ENCODE measurements at regions of chr11 and their contacts with region 1.

Region 1: DNA sequence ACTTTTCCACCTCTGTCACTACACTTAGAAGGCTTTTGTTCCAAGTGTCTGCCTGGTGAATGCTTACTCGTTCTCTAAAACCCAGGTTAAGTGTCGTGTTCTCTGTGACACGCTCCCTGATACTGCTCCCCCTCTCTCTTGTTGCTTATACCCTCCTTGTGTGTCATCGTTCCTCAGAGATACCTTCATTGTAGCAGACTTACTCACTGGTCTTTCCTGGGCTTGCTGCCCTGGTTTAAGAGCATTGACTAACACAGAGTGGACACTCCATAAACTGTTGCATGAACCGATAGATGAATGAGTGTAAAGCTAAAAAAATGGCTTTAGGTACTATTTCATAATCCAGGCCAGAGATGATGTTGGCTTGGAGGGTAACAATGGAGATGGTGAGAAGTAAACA is 171.3 kb downstream of the GRIK4 start:
- DNase-seq: peak in 1 of 2 experiments; percentile 5
- H3K4me3 ChIP-seq: no peak overlapping the region
- H3K4me3 Mint-ChIP-seq: no peak overlapping the region
- H3K27ac Mint-ChIP-seq: no peak overlapping the region
- H3K4me1 ChIP-seq: no peaks in the 10 kb centered on the region
- H3K4me1 Mint-ChIP-seq: no peaks in the 10 kb centered on the region
- H3K27me3 ChIP-seq: no peaks in the 10 kb centered on the region
- H3K27me3 Mint-ChIP-seq: peaks cover 4% of the 10 kb centered on the region
- CTCF ChIP-seq: no peak

Region 2: DNA sequence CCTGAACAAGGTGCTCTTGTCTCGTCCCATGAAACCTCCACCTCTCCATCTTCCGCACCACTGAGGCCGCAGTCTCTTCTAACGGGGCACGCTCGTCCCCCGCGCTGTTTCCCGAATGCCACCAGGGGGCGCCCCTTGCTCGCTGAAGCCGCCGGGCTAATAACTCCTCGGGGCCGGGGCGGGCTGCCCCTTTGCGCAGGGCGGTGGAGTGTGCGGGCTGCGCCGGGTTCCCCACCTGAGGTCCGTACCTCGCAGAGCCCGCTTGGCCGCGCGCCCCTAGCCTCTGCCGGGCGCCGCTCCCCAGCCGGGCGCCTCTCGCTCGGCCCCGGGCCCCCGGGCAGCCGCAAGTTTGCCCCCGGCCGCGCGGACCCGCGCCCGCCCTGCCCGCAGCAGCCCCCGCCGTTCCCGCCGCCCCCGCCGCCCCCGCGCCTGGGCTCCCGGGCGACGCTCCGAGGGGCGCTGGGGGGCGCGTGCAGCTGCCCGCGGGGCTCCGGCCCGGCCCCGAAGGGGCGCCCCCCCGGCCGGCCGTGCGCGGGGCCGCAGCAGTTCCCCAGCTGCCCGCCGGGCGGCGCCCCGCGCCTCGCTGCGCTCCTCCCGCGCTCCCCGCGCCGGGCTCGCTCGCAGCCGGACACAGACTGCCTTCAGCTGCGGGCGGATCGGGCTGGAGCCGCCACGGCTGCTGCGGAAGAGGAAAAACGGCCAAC is 171.6 kb before region 1 on chr11 and contains the start of gene GRIK4:
- CTCF ChIA-PET with region 1: interaction called, 75 read pairs
- POLR2A ChIA-PET with region 1: no interaction called
- intact Hi-C with region 1: loop called (anchors 1 kb)
- DNase-seq: peak; percentile 88 to 95
- H3K4me3 ChIP-seq: peak within 1 kb of the TSS; percentile 55
- H3K4me3 Mint-ChIP-seq: peak within 1 kb of the TSS; percentile 53
- H3K27ac Mint-ChIP-seq: no peak within 1 kb of the TSS
- H3K4me1 ChIP-seq: no peaks in the 10 kb centered on the region
- H3K4me1 Mint-ChIP-seq: peaks cover 5% of the 10 kb centered on the region
- H3K27me3 ChIP-seq: peaks cover 2% of the 10 kb centered on the region; the same call in 1 of the 2 replicates
- H3K27me3 Mint-ChIP-seq: peaks cover 25% of the 10 kb centered on the region
- CTCF ChIP-seq: peak; percentile 98 to 99
- total RNA-seq, gene GRIK4: 2.0 and 3.6 TPM in 2 replicates

Region 3: GRCh38 chr11:120612513-120613263 is 70.2 kb before region 1 on chr11:
- CTCF ChIA-PET with region 1: interaction called, 10 read pairs
- POLR2A ChIA-PET with region 1: no interaction called
- intact Hi-C with region 1: no loop called
- DNase-seq: peak; percentile 44 to 69
- H3K4me3 ChIP-seq: no peak overlapping the region
- H3K4me3 Mint-ChIP-seq: peak overlapping the region; percentile 12
- H3K27ac Mint-ChIP-seq: peak overlapping the region; percentile 72
- H3K4me1 ChIP-seq: peaks cover 19% of the 10 kb centered on the region
- H3K4me1 Mint-ChIP-seq: peaks cover 31% of the 10 kb centered on the region
- H3K27me3 ChIP-seq: no peaks in the 10 kb centered on the region
- H3K27me3 Mint-ChIP-seq: no peaks in the 10 kb centered on the region
- CTCF ChIP-seq: no peak

Region 4: DNA sequence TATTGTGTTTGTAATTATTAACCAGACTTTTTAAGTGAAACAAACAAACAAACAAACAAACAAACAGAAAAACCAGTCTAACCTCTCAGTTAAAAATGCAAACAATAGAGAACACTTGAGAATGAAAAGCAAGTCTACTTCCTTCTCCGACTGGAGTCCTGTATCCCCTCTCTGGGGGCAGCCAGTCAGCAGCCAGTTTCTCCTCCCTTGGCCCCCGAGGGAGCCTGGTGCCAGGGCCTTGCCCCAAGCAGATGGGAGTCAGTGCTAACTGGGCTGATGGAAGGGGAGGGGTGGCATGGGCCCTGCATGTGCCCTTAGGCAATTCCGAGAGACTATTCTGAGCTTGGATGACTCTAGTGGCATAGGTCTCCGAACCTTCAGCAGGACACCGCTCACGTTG is 34.1 kb before region 1 on chr11:
- CTCF ChIA-PET with region 1: interaction called, 11 read pairs
- POLR2A ChIA-PET with region 1: no interaction called
- intact Hi-C with region 1: no loop called
- DNase-seq: peak in 1 of 2 experiments; percentile 30
- H3K4me3 ChIP-seq: no peak overlapping the region
- H3K4me3 Mint-ChIP-seq: no peak overlapping the region
- H3K27ac Mint-ChIP-seq: no peak overlapping the region
- H3K4me1 ChIP-seq: no peaks in the 10 kb centered on the region
- H3K4me1 Mint-ChIP-seq: no peaks in the 10 kb centered on the region
- H3K27me3 ChIP-seq: no peaks in the 10 kb centered on the region
- H3K27me3 Mint-ChIP-seq: no peaks in the 10 kb centered on the region
- CTCF ChIP-seq: no peak

Region 5: GRCh38 chr11:120667281-120667680 is 15.6 kb before region 1 on chr11:
- CTCF ChIA-PET with region 1: interaction called, 11 read pairs
- POLR2A ChIA-PET with region 1: no interaction called
- intact Hi-C with region 1: no loop called
- DNase-seq: peak in 1 of 2 experiments; percentile 32
- H3K4me3 ChIP-seq: no peak overlapping the region
- H3K4me3 Mint-ChIP-seq: no peak overlapping the region
- H3K27ac Mint-ChIP-seq: no peak overlapping the region
- H3K4me1 ChIP-seq: no peaks in the 10 kb centered on the region
- H3K4me1 Mint-ChIP-seq: no peaks in the 10 kb centered on the region
- H3K27me3 ChIP-seq: no peaks in the 10 kb centered on the region
- H3K27me3 Mint-ChIP-seq: peaks cover 5% of the 10 kb centered on the region
- CTCF ChIP-seq: no peak

Region 6: GRCh38 chr11:120710354-120711131 is 27.7 kb after region 1 on chr11:
- CTCF ChIA-PET with region 1: interaction called, 14 read pairs
- POLR2A ChIA-PET with region 1: no interaction called
- intact Hi-C with region 1: loop called (anchors 2 kb)
- DNase-seq: peak; percentile 91 to 94
- H3K4me3 ChIP-seq: no peak overlapping the region
- H3K4me3 Mint-ChIP-seq: no peak overlapping the region
- H3K27ac Mint-ChIP-seq: peak overlapping the region; percentile 14
- H3K4me1 ChIP-seq: peaks cover 26% of the 10 kb centered on the region
- H3K4me1 Mint-ChIP-seq: peaks cover 20% of the 10 kb centered on the region
- H3K27me3 ChIP-seq: no peaks in the 10 kb centered on the region
- H3K27me3 Mint-ChIP-seq: no peaks in the 10 kb centered on the region
- CTCF ChIP-seq: no peak

Region 7: DNA sequence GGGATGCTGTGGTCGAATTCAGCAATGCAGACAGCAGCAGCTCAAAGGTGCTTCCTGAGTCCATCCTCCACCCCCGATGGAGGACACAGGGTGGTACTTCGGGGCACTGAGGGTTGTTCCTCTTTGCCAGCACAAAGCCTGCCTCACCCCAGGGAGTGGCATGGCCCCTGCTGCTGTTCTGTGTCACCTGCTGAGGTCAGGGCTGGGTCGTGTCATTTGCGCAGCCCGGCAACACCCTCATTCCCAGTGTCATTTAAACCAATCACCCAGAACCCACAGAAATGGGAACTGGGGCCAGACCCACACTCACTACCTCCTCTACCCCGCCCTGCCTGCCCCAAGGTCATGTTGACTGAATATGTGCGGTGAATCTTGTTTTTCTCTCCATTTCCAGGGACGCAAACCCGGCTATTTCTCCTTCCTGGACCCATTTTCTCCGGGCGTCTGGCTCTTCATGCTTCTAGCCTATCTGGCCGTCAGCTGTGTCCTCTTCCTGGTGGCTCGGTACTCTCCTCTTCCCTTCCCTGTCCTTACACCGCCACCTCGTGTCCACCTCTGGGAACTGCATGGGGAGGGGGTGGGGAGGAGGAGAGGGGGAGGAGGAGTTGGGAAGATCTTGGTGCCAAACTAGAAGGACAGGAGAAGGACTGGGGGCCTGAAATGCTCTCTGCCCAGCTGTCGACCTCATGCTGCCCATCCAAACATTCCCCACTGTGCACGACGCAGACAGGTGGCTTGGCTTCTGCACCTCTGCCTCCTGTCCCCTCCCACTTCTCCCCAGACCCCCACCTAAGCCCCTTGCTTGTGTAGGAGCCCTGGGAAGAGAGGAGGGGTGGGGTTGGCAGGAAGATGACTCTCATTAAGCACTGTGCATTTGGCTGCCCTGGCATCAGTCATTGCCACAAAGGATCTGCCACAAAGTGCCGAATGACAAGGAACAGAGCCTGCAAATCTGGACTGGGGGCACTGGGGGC is 269.9 kb after region 1 on chr11:
- CTCF ChIA-PET with region 1: interaction called, 16 read pairs
- POLR2A ChIA-PET with region 1: no interaction called
- intact Hi-C with region 1: loop called (anchors 1 kb)
- DNase-seq: peak; percentile 91 to 93
- H3K4me3 ChIP-seq: peak overlapping the region; percentile 13; the same call in 1 of the 2 replicates
- H3K4me3 Mint-ChIP-seq: peak overlapping the region; percentile 67
- H3K27ac Mint-ChIP-seq: no peak overlapping the region
- H3K4me1 ChIP-seq: peaks cover 5% of the 10 kb centered on the region; the same call in 1 of the 2 replicates
- H3K4me1 Mint-ChIP-seq: peaks cover 7% of the 10 kb centered on the region
- H3K27me3 ChIP-seq: peaks cover 1% of the 10 kb centered on the region; the same call in 1 of the 2 replicates
- H3K27me3 Mint-ChIP-seq: peaks cover 10% of the 10 kb centered on the region
- CTCF ChIP-seq: peak; percentile 97 to 99

Measured in Caco-2 (cell line).